PC-9 (cell line): ENCODE measurements at regions of chr1 and their contacts with region 1.

Region 1: GRCh38 chr1:206663832-206664652 is 20.7 kb upstream of the MAPKAPK2 start:
- DNase-seq: peak in 1 of 2 experiments; percentile 59
- H3K4me3 ChIP-seq: no peak overlapping the region
- H3K27ac ChIP-seq: no peak overlapping the region
- H3K4me1 ChIP-seq: no peaks in the 10 kb centered on the region
- H3K27me3 ChIP-seq: 0 out of 2 replicates have a peak, but pooled peaks cover 8% of the 10 kb centered on the region
- CTCF ChIP-seq: peak; percentile 94

Region 2: GRCh38 chr1:206489980-206490770 is 173.9 kb before region 1 on chr1:
- CTCF ChIA-PET with region 1: interaction called, 3 read pairs
- POLR2A ChIA-PET with region 1: no interaction called
- intact Hi-C with region 1: loop called (anchors 1 kb)
- DNase-seq: peak; percentile 51 to 71
- H3K4me3 ChIP-seq: no peak overlapping the region
- H3K27ac ChIP-seq: no peak overlapping the region
- H3K4me1 ChIP-seq: no peaks in the 10 kb centered on the region
- H3K27me3 ChIP-seq: no peaks in the 10 kb centered on the region
- CTCF ChIP-seq: peak; percentile 91

Region 3: DNA sequence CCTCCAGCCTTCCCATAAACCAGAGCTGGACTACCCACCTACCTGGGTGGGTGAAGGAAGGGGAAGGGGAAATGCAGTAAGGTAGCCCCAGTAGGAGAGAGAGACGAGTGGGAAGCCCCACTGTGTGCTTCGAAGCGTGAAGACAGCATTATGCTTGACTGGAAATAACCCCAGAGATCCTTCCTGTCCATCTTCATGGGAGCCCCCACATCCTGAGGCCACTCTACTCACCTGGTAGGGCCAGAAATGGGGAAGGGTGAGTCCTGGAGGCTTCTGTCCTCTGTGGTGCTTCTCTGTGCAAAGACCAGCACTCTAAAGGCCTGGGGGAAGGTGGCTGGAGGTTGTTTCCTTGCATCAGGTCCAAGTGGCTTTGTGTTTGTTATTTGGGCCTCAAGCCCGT is 166.7 kb before region 1 on chr1:
- CTCF ChIA-PET with region 1: interaction called, 17 read pairs
- POLR2A ChIA-PET with region 1: no interaction called
- intact Hi-C with region 1: no loop called
- DNase-seq: no peak
- H3K4me3 ChIP-seq: no peak overlapping the region
- H3K27ac ChIP-seq: no peak overlapping the region
- H3K4me1 ChIP-seq: peaks cover 31% of the 10 kb centered on the region
- H3K27me3 ChIP-seq: no peaks in the 10 kb centered on the region
- CTCF ChIP-seq: no peak

Region 4: DNA sequence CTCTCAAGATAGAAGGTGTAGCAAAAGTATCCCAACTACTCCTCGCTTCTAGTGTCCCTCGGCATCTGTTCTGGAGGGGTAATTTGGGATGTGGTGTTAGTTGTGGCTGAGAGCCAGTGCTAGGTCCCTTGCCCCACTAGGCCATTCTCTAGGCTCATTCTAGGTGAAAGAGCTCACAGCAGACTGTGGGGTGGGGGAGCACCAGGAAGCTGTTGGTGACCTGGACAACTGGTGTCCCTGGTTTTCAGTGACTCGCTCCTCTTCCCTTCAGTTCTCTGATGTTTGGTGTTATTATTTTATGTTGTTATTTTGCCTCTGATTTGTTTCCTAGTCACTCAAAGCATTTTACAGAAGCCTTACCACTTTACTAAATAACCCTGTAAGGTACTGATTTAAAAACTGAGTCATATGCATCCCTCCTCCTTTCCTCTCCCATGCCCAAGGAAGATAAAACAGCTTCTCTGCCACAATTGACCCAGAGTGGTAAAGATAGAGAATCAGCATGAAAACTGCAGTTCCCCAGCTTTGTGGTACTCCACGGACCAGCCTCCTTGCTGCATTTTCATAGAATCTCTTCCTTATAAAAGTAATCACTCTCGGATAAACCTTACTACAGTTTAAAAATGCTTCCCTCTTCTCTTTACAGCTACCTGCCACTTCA is 14.7 kb before region 1 on chr1:
- CTCF ChIA-PET with region 1: interaction called, 11 read pairs
- POLR2A ChIA-PET with region 1: interaction called, 3 read pairs
- intact Hi-C with region 1: no loop called
- DNase-seq: peak; percentile 14 to 74
- H3K4me3 ChIP-seq: no peak overlapping the region
- H3K27ac ChIP-seq: peak overlapping the region; percentile 35
- H3K4me1 ChIP-seq: peaks cover 10% of the 10 kb centered on the region
- H3K27me3 ChIP-seq: no peaks in the 10 kb centered on the region
- CTCF ChIP-seq: no peak

Region 5: DNA sequence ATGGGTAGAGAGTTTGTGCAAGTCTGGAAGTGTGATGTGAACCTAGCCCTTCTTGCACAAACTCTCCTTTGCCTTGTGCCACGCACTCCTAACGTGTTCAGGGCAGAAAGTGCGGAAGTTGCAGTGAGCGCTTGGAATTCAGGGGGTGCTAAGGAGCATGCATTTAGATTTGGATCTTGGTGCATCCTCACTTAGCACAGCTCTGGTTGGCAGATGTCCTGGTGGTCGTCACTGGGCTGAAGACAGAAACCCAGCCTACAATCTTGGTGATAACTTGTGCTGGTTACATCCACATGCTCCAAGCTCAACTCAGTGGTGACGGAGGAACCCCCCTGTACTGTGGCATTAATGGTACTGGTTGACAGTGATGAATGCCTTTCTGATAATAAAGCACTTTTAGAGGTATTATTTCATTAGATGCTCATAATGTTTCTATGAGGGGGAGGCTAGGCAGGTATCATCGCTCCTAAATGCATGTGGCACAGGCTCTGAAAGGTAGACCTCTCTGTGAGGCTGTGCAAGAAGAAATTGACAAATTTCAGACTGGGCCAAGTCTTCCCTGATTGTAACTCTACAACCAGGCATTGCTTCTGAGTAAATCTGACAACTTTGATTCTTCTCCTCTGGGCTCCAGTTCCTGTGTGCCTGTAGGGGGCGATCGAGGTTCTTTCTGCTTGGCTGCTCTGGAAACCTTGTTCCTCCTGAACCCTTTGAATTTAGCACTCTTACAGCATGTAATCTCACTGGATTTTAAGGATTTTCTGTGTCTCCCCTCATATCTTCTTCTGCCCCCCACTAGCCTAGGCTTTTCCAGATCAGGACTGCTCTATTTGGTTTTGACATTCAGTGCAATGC is 61.3 kb after region 1 on chr1:
- CTCF ChIA-PET with region 1: no interaction called
- POLR2A ChIA-PET with region 1: no interaction called
- intact Hi-C with region 1: no loop called
- DNase-seq: peak in 1 of 2 experiments; percentile 21
- H3K4me3 ChIP-seq: no peak overlapping the region
- H3K27ac ChIP-seq: no peak overlapping the region
- H3K4me1 ChIP-seq: peaks cover 44% of the 10 kb centered on the region
- H3K27me3 ChIP-seq: no peaks in the 10 kb centered on the region
- CTCF ChIP-seq: no peak; the same call in 1 of the 2 replicates

Region 6: GRCh38 chr1:206784471-206784903 is 120.4 kb after region 1 on chr1:
- CTCF ChIA-PET with region 1: no interaction called
- POLR2A ChIA-PET with region 1: no interaction called
- intact Hi-C with region 1: no loop called
- DNase-seq: no peak
- H3K4me3 ChIP-seq: no peak overlapping the region
- H3K27ac ChIP-seq: no peak overlapping the region
- H3K4me1 ChIP-seq: peaks cover 2% of the 10 kb centered on the region
- H3K27me3 ChIP-seq: peaks cover 4% of the 10 kb centered on the region; the same call in 1 of the 2 replicates
- CTCF ChIP-seq: no peak